Activated CD4-positive, alpha-beta T cell treated with anti-CD3 and anti-CD28 coated beads for 36 hours (primary cell): ENCODE measurements at regions of chr5 and their contacts with region 1.

Region 1: DNA sequence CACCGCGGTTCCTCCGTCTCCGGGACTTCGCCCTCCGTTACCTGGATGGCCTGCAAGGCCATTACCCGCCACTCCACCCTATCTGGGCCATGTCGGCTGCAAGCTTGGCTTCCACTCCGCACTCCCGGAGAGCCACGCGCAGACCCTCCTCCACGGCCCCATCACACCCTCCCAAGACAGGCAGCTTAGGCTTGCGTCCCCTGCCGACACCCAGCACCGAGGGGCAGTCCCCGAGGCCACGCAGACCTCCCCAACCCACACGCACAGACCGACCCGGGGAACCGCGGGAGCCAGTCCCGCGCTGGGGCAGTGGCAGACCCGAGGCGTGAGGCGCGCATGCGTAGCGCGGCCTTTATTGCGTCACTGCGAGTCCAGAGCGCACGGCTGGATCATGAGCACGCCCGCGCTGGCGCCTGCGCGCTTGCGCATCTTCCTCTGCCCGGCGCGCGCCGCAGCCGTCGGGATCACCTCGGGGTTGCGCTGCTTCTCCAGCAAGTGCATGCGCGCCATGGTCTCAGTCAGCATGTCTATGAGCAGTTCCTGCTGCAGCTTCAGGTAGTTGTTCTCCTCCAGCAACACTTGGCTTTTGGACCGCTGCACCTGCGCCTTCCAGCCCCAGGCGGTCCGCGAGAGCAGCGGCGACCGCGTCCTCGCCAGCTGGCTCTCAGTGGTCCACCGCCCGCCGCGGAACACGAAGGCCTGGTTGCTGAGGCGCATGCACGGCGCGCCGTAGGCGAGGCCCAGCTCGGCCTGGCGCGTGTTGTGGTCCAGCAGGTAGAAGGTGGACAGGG is 2.4 kb downstream of the CBY3 start:
- DNase-seq: peak; percentile 97
- ATAC-seq: peak; percentile 90
- H3K4me3 Mint-ChIP-seq: peak overlapping the region; percentile 91
- H3K27ac Mint-ChIP-seq: peak overlapping the region; percentile 97
- H3K4me1 Mint-ChIP-seq: peaks cover 23% of the 10 kb centered on the region
- H3K27me3 Mint-ChIP-seq: no peaks in the 10 kb centered on the region

Region 2: GRCh38 chr5:179123491-179124272 is 554.7 kb before region 1 on chr5:
- CTCF ChIA-PET with region 1: no interaction called
- POLR2A ChIA-PET with region 1: no interaction called
- intact Hi-C with region 1: no loop called
- DNase-seq: no peak
- ATAC-seq: no peak
- H3K4me3 Mint-ChIP-seq: no peak overlapping the region
- H3K27ac Mint-ChIP-seq: no peak overlapping the region
- H3K4me1 Mint-ChIP-seq: no peaks in the 10 kb centered on the region
- H3K27me3 Mint-ChIP-seq: no peaks in the 10 kb centered on the region

Region 3: GRCh38 chr5:179166886-179167841 is 511.3 kb before region 1 on chr5:
- CTCF ChIA-PET with region 1: no interaction called
- POLR2A ChIA-PET with region 1: no interaction called
- intact Hi-C with region 1: loop called in 1 of 2 experiments (anchors 10 kb)
- DNase-seq: peak; percentile 85
- ATAC-seq: peak; percentile 95
- H3K4me3 Mint-ChIP-seq: no peak overlapping the region
- H3K27ac Mint-ChIP-seq: no peak overlapping the region
- H3K4me1 Mint-ChIP-seq: no peaks in the 10 kb centered on the region
- H3K27me3 Mint-ChIP-seq: peaks cover 4% of the 10 kb centered on the region

Region 4: GRCh38 chr5:179599975-179600391 is 78.4 kb before region 1 on chr5:
- CTCF ChIA-PET with region 1: no interaction called
- POLR2A ChIA-PET with region 1: no interaction called
- intact Hi-C with region 1: no loop called
- DNase-seq: no peak
- ATAC-seq: no peak
- H3K4me3 Mint-ChIP-seq: no peak overlapping the region
- H3K27ac Mint-ChIP-seq: no peak overlapping the region
- H3K4me1 Mint-ChIP-seq: no peaks in the 10 kb centered on the region
- H3K27me3 Mint-ChIP-seq: no peaks in the 10 kb centered on the region

Region 5: DNA sequence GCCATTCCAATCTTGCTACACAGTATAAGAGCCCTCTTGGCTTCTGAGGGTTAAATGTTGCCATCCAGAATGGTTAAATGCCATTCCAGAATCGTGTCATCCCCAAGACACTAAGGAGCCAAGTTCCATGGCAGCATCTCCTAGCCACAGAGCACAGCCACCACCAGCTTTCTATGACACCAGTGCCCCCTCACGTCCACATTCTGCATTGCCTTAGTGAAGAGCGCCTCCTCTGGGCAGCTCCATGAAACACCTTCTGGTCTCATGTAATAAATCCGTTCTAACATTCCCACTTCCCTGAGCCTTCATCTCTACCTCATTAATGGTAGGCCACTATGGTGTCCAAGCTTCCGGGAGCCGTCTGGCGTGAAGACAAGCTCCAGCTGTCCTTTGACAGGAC is 10.0 kb before region 1 on chr5:
- CTCF ChIA-PET with region 1: interaction called, 13 read pairs
- POLR2A ChIA-PET with region 1: no interaction called
- intact Hi-C with region 1: no loop called
- DNase-seq: peak; percentile 69
- ATAC-seq: peak; percentile 81
- H3K4me3 Mint-ChIP-seq: no peak overlapping the region
- H3K27ac Mint-ChIP-seq: no peak overlapping the region
- H3K4me1 Mint-ChIP-seq: no peaks in the 10 kb centered on the region
- H3K27me3 Mint-ChIP-seq: no peaks in the 10 kb centered on the region

Region 6: GRCh38 chr5:179795863-179796833 is 117.7 kb after region 1 on chr5:
- CTCF ChIA-PET with region 1: no interaction called
- POLR2A ChIA-PET with region 1: no interaction called
- intact Hi-C with region 1: loop called in 1 of 2 experiments (anchors 5 kb)
- DNase-seq: peak; percentile 87
- ATAC-seq: peak; percentile 80
- H3K4me3 Mint-ChIP-seq: peak overlapping the region; percentile 64
- H3K27ac Mint-ChIP-seq: no peak overlapping the region
- H3K4me1 Mint-ChIP-seq: peaks cover 25% of the 10 kb centered on the region
- H3K27me3 Mint-ChIP-seq: no peaks in the 10 kb centered on the region

Region 7: DNA sequence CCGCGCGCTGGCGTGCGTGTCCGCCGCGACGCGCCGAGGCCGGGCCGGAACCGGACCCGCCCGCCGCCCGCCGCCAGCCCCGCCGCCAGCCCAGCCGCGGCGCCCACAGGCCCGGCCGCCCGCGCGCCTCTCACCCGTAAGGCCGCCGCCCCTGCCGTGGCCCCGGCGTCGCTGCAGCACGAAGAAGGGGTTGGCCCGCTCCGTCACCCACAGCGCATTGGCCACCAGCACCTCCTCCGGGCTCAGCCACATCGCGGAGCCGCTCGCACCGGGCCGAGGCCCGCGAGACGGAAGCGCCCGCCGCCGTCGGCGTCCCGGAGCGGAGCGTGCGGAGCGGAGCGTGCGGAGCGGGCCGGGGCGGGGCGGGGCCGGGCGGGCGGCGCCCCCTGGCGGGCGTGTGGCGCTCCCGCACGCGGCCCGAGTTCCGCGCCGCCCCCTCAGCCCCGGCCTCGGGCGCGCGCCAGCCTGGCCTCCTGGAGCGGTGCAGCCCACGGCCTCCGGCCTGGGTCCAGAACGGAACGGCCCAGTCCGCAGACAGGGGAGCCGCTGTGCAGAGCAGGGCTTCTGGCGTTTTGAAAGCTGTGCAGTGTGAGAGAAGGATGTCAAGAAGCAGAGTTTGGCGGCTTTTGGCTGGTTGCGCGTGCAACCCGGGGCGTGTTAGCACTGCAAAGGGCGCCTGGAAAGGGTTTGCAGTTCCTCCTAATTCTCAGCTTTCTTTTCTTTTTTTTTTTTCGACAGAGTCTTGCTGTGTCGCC is 229.3 kb after region 1 on chr5 and contains the start of gene TBC1D9B:
- CTCF ChIA-PET with region 1: no interaction called
- POLR2A ChIA-PET with region 1: no interaction called
- intact Hi-C with region 1: loop called in 1 of 2 experiments (anchors 1 kb)
- DNase-seq: peak; percentile 82
- ATAC-seq: peak; percentile 90
- H3K4me3 Mint-ChIP-seq: peak within 1 kb of the TSS; percentile 92
- H3K27ac Mint-ChIP-seq: peak within 1 kb of the TSS; percentile 83
- H3K4me1 Mint-ChIP-seq: peaks cover 13% of the 10 kb centered on the region
- H3K27me3 Mint-ChIP-seq: no peaks in the 10 kb centered on the region
- total RNA-seq, gene TBC1D9B: 103 to 121 TPM